Mammary epithelial cell (primary cell): ENCODE measurements at regions of chr18 and their contacts with region 1.

Region 1: DNA sequence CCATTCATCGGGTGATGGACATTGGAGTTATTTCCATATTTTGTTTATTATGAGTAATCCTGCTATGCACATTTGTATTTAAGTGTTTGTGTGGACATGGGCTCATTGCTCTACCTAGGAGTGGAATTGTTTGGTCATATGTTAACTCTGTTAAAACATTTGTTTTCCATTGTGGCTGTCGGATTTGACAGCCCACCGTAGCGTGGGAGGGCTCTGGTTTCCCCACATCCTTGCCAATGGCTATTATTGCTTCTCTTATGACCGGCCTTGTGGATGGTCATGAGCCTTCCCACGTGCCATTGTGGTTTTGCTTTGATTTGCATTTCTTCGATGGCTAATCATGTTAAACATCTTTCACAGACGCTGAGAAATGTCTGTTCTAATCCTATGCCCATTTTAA is 92.0 kb downstream of the ZNF236 start:
- DNase-seq: no peak
- H3K4me3 ChIP-seq: no peak overlapping the region
- H3K27ac ChIP-seq: no peak overlapping the region
- H3K4me1 ChIP-seq: no peaks in the 10 kb centered on the region
- H3K27me3 ChIP-seq: no peaks in the 10 kb centered on the region
- CTCF ChIP-seq: no peak

Region 2: DNA sequence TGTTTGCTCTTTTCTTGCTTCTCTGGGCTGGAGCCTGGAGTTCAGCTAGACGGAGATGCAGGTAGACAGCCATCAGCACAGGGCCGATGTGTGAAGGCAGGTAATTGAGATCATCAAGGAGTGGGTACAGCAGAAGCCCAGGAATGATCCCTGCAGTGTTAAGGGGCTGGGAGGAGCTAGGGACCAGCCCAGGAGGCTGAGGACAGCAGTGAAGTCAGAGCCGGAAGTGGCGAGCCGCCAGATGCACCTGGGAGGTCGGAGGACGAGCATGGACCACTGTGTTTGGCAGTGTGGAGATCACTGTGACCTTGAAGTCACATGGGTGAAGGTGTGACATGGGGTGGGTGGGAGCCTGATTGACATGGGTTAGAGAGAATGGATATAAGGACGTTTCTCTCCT is 98.2 kb before region 1 on chr18:
- CTCF ChIA-PET with region 1: no interaction called
- dilution Hi-C with region 1: no loop called
- in situ Hi-C with region 1: no loop called
- intact Hi-C with region 1: no loop called
- DNase-seq: no peak
- H3K4me3 ChIP-seq: no peak overlapping the region
- H3K27ac ChIP-seq: no peak overlapping the region
- H3K4me1 ChIP-seq: peaks cover 4% of the 10 kb centered on the region
- H3K27me3 ChIP-seq: no peaks in the 10 kb centered on the region
- CTCF ChIP-seq: no peak

Region 3: GRCh38 chr18:76875390-76876325 is 38.7 kb before region 1 on chr18:
- CTCF ChIA-PET with region 1: no interaction called
- dilution Hi-C with region 1: loop called (anchors 5 kb)
- in situ Hi-C with region 1: no loop called
- intact Hi-C with region 1: no loop called
- DNase-seq: peak; percentile 20
- H3K4me3 ChIP-seq: no peak overlapping the region
- H3K27ac ChIP-seq: no peak overlapping the region
- H3K4me1 ChIP-seq: no peaks in the 10 kb centered on the region
- H3K27me3 ChIP-seq: no peaks in the 10 kb centered on the region
- CTCF ChIP-seq: peak; percentile 60 to 64

Region 4: DNA sequence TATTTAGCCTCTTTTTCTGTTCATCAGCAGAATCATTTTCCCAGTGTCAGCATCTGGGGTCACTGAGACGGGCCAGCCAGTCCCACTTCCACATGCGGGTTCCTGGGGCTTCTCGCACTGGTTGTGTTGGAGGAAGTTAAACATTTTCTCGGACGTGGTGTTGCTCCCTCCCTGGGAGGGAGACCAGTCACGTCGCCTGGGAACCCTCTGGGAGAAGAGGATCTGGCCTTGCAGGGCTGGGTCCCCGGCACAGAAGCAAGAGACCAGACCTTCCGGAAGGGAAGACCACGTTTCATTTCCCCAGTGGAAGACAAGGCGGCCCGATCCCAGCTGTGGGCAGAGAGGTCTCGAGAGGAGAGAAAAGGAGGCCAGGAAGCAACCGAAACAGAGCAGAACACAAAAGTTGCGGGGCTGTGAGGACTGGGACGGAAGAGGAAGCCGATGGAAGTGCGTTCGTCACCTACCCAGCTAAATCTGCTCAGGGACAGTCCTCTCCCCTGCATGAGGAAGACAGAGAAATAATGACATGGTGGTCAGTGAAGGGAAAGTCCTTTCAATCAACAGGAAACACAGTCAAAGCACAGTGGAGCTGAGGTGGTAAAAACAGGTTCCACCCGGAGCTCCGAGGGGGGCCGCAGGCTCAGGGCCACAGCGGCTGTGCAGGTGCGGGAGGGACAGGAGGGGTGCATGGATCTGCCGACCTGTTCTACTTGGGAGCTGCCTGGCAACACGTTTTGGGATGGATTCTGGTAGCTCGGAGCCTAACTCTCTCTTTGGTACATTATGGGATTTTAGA is 73.9 kb after region 1 on chr18:
- CTCF ChIA-PET with region 1: no interaction called
- dilution Hi-C with region 1: no loop called
- in situ Hi-C with region 1: no loop called
- intact Hi-C with region 1: no loop called
- DNase-seq: no peak
- H3K4me3 ChIP-seq: no peak overlapping the region
- H3K27ac ChIP-seq: no peak overlapping the region
- H3K4me1 ChIP-seq: no peaks in the 10 kb centered on the region
- H3K27me3 ChIP-seq: no peaks in the 10 kb centered on the region
- CTCF ChIP-seq: no peak

Region 5: GRCh38 chr18:77207540-77207939 is 293.2 kb after region 1 on chr18:
- CTCF ChIA-PET with region 1: no interaction called
- dilution Hi-C with region 1: no loop called
- in situ Hi-C with region 1: no loop called
- intact Hi-C with region 1: no loop called
- DNase-seq: peak; percentile 42
- H3K4me3 ChIP-seq: no peak overlapping the region
- H3K27ac ChIP-seq: no peak overlapping the region
- H3K4me1 ChIP-seq: no peaks in the 10 kb centered on the region
- H3K27me3 ChIP-seq: no peaks in the 10 kb centered on the region
- CTCF ChIP-seq: peak; percentile 67 to 78